ENCODE measurements at regions of chr7 and their contacts with region 1.

Region 1: DNA sequence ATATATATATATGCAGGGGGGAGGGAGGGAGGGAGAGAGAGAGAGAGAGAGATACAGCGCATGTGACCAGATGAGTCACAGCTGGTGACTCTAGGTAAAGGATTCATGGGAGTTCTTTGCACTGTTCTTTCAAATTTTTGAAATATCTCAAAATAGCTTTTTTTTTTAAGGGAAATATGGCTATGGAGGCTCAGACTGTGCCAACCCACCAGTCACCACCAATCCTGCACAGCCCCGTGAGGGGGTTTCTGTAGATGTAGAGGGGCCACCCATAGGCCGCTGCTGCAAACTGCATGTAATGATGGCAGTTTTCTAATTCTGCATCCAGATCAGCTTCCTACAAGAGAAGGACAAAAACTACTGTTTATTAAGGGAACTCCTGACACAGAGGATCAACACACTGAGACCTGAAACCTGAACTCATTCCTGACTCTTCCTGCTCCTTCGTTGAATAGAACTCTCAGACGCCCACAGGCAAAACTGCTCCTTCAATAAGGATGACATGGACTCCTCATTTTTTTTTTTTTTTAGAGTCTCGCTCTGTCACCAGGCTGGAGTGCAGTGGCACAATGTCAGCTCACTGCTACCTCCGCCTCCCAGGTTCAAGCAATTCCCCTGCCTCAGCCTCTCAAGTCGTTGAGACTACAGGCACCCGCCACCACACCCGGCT is 17.3 kb downstream of the DAGLB start:
- DNase-seq: no peak
- ATAC-seq: no peak
- H3K4me3 ChIP-seq: no peak overlapping the region
- H3K27ac ChIP-seq: peak overlapping the region in 1 of 12 donors; percentile 39
- H3K4me1 ChIP-seq: peaks cover 0 to 50% (median 3%) of the 10 kb centered on the region in 12 donors
- H3K27me3 ChIP-seq: no peaks in the 10 kb centered on the region
- CTCF ChIP-seq: no peak
- POLR2A ChIP-seq: no peak

Region 2: DNA sequence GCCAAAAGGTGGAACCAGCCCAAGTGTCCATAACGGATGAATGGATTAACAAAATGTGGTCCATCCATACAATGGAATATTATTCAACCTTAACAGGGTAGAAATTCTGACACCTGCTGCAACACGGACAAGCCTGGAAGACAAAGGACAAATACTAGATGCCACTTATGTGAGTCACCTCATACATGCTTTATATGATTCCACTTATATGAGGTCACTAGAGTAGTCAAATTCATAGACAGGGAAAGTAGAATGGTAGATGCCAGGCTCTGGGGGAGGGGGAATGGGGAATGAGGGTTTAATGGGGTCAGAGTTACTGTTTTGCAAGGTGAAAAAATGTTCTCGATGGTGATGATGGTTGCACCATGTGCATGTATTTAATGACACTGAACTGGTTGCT is 123.9 kb before region 1 on chr7:
- intact Hi-C with region 1: no loop called
- DNase-seq: no peak
- ATAC-seq: no peak
- H3K4me3 ChIP-seq: no peak overlapping the region
- H3K27ac ChIP-seq: no peak overlapping the region
- H3K4me1 ChIP-seq: peaks cover 0 to 3% (median 0%) of the 10 kb centered on the region in 12 donors
- H3K27me3 ChIP-seq: no peaks in the 10 kb centered on the region
- CTCF ChIP-seq: no peak
- POLR2A ChIP-seq: no peak

Region 3: GRCh38 chr7:6359021-6359420 is 71.4 kb before region 1 on chr7:
- intact Hi-C with region 1: loop called in 1 of 10 experiments (anchors 5 kb)
- DNase-seq: no peak
- ATAC-seq: no peak
- H3K4me3 ChIP-seq: no peak overlapping the region
- H3K27ac ChIP-seq: peak overlapping the region in 1 of 12 donors; percentile 67
- H3K4me1 ChIP-seq: peaks cover 0 to 21% (median 0%) of the 10 kb centered on the region in 12 donors
- H3K27me3 ChIP-seq: no peaks in the 10 kb centered on the region
- CTCF ChIP-seq: no peak
- POLR2A ChIP-seq: no peak

Region 4: DNA sequence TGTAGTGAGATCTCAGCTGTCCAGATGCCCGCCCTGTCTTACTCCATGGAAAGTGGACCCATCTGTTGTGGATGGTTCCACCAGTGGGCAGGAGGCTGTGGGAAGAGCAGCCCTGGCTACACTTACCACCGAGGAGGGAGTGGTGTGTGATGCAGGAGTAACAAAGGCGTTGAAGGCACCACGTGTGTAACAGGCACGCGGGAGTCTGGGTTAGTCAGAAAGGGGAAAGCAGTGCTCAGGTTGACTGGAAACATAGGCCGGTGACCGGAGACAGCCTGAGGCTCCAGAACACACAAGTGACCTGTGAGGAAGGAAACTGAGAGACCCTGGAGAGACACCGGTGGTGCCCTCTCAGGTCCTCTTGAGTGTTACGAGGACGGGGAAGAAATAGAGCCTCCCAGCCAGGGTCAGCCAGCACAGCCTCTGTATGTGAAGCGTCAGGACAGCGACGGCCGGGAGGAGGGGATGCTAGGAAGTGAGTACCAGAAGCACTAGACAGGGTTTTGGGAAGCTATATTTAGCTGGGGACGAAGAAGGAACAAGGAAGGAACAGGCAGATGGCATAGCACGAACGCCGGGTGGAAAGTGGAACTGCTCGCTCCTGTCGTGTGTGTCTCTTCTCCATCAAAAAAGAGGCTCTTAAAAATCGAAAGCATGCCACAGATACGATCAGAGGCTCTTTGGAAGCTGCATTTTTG is 34.4 kb before region 1 on chr7:
- intact Hi-C with region 1: loop called in 1 of 10 experiments (anchors 5 kb)
- DNase-seq: peak in 3 of 5 donors; percentile 38 to 65 (median 51)
- ATAC-seq: peak; percentile 47 to 71 (median 58)
- H3K4me3 ChIP-seq: peak overlapping the region in 5 of 12 donors; percentile 1 to 28 (median 18)
- H3K27ac ChIP-seq: peak overlapping the region; percentile 6 to 88 (median 50)
- H3K4me1 ChIP-seq: peaks cover 17 to 93% (median 79%) of the 10 kb centered on the region in 12 donors
- H3K27me3 ChIP-seq: no peaks in the 10 kb centered on the region
- CTCF ChIP-seq: no peak
- POLR2A ChIP-seq: no peak

Region 5: DNA sequence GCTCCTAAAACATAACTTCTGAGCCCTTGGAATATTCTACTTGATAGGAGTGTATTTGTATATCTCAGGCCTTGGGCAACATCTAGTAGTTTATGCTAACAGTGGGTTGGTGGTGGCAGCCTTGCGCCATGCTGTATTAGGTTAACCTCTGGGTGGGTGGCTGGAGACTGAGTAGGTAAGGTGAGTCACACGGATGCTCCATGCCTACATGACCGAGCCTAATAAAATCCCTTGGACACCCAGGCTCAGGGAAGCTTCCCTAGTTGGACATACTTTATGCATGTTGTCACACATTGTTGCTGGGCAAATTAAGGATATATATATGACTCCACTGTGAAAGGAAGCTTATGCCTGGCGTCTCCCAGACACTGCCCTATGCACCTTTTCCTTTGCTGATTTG is 23.3 kb after region 1 on chr7:
- intact Hi-C with region 1: no loop called
- DNase-seq: no peak
- ATAC-seq: no peak
- H3K4me3 ChIP-seq: no peak overlapping the region
- H3K27ac ChIP-seq: no peak overlapping the region
- H3K4me1 ChIP-seq: peaks cover 0 to 4% (median 0%) of the 10 kb centered on the region in 12 donors
- H3K27me3 ChIP-seq: no peaks in the 10 kb centered on the region
- CTCF ChIP-seq: no peak
- POLR2A ChIP-seq: no peak

Measured in heart left ventricle (tissue), 16 donors.